ENCODE measurements at regions of chr19 and their contacts with region 1.

Region 1: GRCh38 chr19:49676690-49677231 is 310 bp upstream of the PRMT1 start:
- DNase-seq: peak; percentile 91 to 100 (median 98)
- ATAC-seq: peak; percentile 74 to 76
- H3K4me3 Mint-ChIP-seq: peak overlapping the region; percentile 89 to 100 (median 98)
- H3K27ac Mint-ChIP-seq: peak overlapping the region; percentile 84 to 100 (median 98)
- H3K4me1 Mint-ChIP-seq: peaks cover 32 to 55% (median 44%) of the 10 kb centered on the region in 4 donors
- H3K27me3 Mint-ChIP-seq: no peaks in the 10 kb centered on the region

Region 2: GRCh38 chr19:49451430-49452181 is 225.2 kb before region 1 on chr19 and contains the start of gene PIH1D1:
- POLR2A ChIA-PET with region 1: interaction called, 14 read pairs
- DNase-seq: peak; percentile 76 to 99 (median 94)
- ATAC-seq: peak; percentile 62 to 69
- H3K4me3 Mint-ChIP-seq: peak within 1 kb of the TSS; percentile 95 to 100 (median 99)
- H3K27ac Mint-ChIP-seq: peak within 1 kb of the TSS; percentile 93 to 100 (median 100)
- H3K4me1 Mint-ChIP-seq: peaks cover 22 to 63% (median 61%) of the 10 kb centered on the region in 4 donors
- H3K27me3 Mint-ChIP-seq: no peaks in the 10 kb centered on the region
- polyA plus RNA-seq, gene PIH1D1: 85.3 to 88.9 (median 86.7) TPM

Region 3: DNA sequence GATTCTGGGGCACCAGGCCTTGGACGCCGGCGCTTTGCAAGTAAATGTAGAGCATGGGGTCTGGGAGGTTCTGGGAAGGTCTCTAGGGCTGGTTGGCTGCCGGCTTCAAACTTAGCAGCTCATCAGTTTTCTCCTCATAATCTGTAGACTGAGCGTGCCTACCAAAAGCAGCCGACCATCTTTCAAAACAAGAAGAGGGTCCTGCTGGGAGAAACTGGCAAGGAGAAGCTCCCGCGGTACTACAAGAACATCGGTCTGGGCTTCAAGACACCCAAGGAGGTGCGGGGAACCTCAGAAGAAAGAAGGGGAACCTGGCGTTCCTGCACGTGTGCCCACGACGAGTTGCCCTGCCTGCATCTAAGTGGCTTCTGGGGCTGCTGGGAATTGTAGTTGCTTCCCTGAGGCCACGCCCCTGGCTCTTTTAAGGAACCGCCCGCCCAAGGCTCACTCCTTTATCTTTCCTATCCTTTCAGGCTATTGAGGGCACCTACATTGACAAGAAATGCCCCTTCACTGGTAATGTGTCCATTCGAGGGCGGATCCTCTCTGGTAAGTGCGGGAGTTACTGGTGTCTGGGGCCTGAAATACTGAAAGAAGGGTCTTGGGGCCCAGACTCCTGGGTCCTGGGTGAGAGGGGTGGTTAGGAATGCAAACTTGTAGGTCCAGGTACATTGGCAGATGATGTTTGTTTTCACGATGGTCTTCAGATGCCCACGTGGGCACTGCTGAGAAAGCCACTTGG is 179.5 kb before region 1 on chr19:
- POLR2A ChIA-PET with region 1: interaction called, 19 read pairs
- DNase-seq: peak; percentile 51 to 87 (median 72)
- ATAC-seq: peak; percentile 3 to 5
- H3K4me3 Mint-ChIP-seq: peak overlapping the region; percentile 96 to 100 (median 100)
- H3K27ac Mint-ChIP-seq: peak overlapping the region; percentile 96 to 100 (median 99)
- H3K4me1 Mint-ChIP-seq: peaks cover 18 to 79% (median 66%) of the 10 kb centered on the region in 4 donors
- H3K27me3 Mint-ChIP-seq: peaks cover 0 to 2% (median 0%) of the 10 kb centered on the region in 5 donors

Region 4: DNA sequence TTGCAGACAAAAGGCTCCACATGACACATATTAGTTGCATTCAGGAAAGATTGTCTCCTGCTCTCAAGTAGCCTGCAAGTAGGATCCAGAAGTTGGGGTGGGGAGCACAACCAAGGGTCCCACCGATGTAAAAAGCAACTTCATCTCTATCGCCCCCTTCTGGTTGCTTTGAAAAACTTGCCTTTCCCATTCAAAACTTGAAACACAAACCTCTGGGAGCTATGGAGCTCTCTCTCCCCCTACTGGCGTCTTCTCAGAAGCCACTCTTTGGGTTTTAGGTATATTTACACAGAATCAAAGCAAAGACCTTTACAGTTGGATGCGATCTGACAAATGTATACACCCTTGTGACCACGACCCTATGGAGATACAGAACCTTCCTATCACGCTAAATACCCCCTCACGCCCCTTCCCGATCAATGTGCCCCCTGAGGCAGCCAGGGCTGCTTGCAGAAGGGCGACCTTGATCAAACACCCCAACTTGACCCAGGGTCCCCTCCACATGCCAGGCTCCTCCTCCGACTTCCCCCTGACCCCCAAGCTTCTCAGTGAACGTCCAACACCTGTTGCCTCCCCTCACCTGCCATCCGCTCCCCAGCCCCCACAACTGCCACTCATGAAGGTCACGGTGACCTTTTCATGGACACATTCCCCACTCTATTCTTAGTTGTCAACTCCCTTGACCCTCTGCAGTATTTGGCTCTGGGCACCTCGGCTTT is 106.5 kb before region 1 on chr19:
- POLR2A ChIA-PET with region 1: interaction called, 11 read pairs
- DNase-seq: peak in 9 of 10 donors; percentile 62 to 88 (median 79)
- ATAC-seq: peak; percentile 13 to 14
- H3K4me3 Mint-ChIP-seq: peak overlapping the region in 9 of 10 donors; percentile 29 to 84 (median 68)
- H3K27ac Mint-ChIP-seq: peak overlapping the region; percentile 83 to 99 (median 96)
- H3K4me1 Mint-ChIP-seq: peaks cover 19 to 59% (median 56%) of the 10 kb centered on the region in 4 donors
- H3K27me3 Mint-ChIP-seq: peaks cover 0 to 2% (median 0%) of the 10 kb centered on the region in 5 donors

Region 5: GRCh38 chr19:49590071-49590970 is 86.4 kb before region 1 on chr19:
- POLR2A ChIA-PET with region 1: interaction called, 27 read pairs
- DNase-seq: peak; percentile 89 to 99 (median 98)
- ATAC-seq: peak; percentile 78 to 82
- H3K4me3 Mint-ChIP-seq: peak overlapping the region; percentile 86 to 97 (median 92)
- H3K27ac Mint-ChIP-seq: peak overlapping the region; percentile 34 to 97 (median 92)
- H3K4me1 Mint-ChIP-seq: peaks cover 22 to 46% (median 34%) of the 10 kb centered on the region in 4 donors
- H3K27me3 Mint-ChIP-seq: no peaks in the 10 kb centered on the region

Region 6: DNA sequence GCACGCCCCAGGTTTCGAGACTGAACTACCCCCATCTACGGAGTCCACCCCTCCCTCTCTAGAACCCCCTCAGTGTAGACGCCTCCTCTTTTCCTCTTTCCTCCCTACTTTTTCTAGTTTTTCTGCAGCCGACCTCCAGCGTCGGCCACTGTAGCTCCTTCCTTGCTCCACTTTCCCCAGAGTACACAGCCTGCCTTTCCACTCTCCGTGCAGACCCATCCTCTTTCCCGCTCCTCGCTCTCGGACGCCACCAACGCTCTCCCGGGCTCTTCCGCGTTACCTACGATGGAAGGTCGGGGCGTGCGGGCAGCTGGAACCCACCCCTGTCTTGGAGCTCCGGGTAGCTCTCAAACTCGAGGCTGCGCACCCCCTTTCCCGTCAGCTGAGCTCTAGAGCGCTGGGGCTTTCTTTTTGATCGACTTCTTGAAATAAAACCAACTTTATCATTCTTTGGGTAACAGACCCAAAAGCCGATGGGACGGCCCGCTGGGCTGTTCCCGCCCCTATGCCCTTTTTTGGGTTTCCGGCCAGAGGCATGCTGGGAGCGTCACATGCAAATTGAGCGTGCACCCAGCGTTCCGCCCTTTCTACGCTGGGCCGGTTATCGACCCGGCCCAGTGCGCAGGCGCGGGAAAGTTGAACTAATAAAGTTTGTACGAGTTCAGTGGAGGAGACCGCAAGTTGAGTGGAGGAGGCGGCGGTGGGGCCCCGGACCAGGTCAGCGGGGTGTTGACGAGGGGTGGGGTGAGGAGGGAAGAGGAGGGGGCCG is 11.2 kb before region 1 on chr19 and contains the starts of genes BCL2L12 and IRF3:
- POLR2A ChIA-PET with region 1: interaction called, 43 read pairs
- DNase-seq: peak; percentile 99 to 100 (median 99)
- ATAC-seq: peak; percentile 81 to 86
- H3K4me3 Mint-ChIP-seq: peak within 1 kb of the TSS; percentile 96 to 100 (median 99)
- H3K27ac Mint-ChIP-seq: peak within 1 kb of the TSS; percentile 94 to 100 (median 98)
- H3K4me1 Mint-ChIP-seq: peaks cover 23 to 53% (median 42%) of the 10 kb centered on the region in 4 donors
- H3K27me3 Mint-ChIP-seq: no peaks in the 10 kb centered on the region
- polyA plus RNA-seq, gene BCL2L12: 19.3 to 20.6 (median 19.6) TPM
- polyA plus RNA-seq, gene IRF3: 54.6 to 76.1 (median 65.1) TPM